ENCODE measurements at regions of chr19 and their contacts with region 1.

Region 1: DNA sequence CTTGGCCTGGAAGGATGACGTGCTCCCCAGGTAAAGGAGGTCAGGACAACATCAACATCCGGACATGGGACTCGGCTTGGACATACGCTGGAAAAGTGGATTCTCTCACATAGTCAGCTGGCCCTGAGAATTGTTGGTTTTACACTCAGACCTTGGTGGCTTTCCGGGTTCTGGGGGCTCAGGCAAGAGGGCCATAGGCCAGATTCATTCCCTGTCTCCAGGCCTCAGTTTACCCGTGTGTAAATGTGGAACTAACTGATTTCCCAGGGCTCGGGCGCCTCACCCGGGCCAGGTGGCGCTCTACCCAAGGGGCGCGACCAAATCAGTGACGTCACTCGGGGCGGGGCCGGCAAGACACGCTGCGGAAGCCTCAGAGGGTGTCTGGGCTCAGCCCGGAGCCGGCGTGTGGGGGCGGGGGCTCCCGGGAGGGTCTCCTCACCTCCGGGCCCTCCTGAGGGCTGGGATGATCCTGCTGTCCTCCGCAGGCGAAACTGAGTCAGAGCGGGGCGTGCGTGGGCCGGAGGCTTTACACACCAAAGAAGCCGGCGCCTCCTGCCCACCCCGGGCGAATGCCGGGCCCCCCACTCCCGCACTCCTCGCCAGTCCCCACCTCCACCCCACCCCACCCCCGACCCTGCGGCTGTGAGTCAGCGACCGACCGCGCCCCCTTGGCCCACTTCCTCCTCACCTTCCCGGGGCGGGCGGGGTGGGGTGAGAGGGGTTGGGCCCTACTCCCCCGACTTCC is 861 bp upstream of the VASP start:
- DNase-seq: peak; percentile 95 to 100 (median 97)
- ATAC-seq: peak; percentile 76
- H3K4me3 ChIP-seq: peak overlapping the region; percentile 89
- H3K4me3 Mint-ChIP-seq: peak overlapping the region; percentile 99
- H3K27ac ChIP-seq: peak overlapping the region; percentile 94 to 95
- H3K27ac Mint-ChIP-seq: peak overlapping the region; percentile 99
- H3K4me1 ChIP-seq: peaks cover 47% of the 10 kb centered on the region
- H3K4me1 Mint-ChIP-seq: peaks cover 47% of the 10 kb centered on the region
- H3K27me3 ChIP-seq: no peaks in the 10 kb centered on the region
- H3K27me3 Mint-ChIP-seq: no peaks in the 10 kb centered on the region
- CTCF ChIP-seq: peak; percentile 63

Region 2: DNA sequence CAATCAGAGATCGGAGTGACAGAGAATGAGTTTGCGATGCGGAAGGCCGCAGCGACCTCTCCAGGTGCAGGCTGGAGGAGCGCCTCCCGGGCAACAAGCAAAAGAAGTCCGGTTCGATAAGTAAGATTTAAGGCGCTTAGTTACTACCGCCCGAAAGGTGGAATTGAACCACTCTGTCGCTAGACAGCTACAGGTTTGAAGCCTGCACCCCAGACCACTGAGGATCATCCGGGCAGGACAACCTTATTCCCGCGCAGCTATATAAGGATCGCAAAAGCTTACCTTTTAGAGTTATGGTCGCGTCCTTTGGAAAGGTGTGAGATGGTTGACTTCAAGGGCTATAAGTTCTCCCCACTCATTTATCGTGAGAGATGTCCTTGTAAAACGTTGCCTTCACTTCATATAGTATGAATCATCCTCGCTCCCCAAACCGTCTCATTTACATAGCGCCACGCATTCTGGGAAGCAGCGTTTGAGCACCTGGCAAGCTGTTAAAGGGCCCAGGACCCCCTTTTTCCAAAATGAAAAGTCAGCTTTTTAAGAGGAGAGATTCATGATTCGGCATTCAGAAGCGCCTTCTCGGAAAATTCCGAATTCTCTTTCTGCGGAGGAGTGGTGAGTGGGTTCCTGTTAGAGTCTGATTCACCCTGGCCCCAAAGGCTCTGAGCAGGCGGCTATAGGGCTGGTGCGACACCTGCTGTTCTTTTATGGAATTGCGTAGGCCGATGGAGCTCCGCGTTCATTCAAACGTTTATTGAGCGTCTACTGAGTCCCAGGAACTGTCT is 27.8 kb before region 1 on chr19:
- CTCF ChIA-PET with region 1: interaction called, 11 read pairs
- POLR2A ChIA-PET with region 1: no interaction called
- intact Hi-C with region 1: no loop called
- DNase-seq: peak; percentile 79 to 95 (median 86)
- ATAC-seq: peak; percentile 74
- H3K4me3 ChIP-seq: peak overlapping the region; percentile 64
- H3K4me3 Mint-ChIP-seq: peak overlapping the region; percentile 86
- H3K27ac ChIP-seq: peak overlapping the region; percentile 98 to 99
- H3K27ac Mint-ChIP-seq: peak overlapping the region; percentile 99
- H3K4me1 ChIP-seq: peaks cover 37% of the 10 kb centered on the region
- H3K4me1 Mint-ChIP-seq: peaks cover 29% of the 10 kb centered on the region
- H3K27me3 ChIP-seq: peaks cover 0 to under 1% of the 10 kb centered on the region in 2 experiments
- H3K27me3 Mint-ChIP-seq: peaks cover 21% of the 10 kb centered on the region
- CTCF ChIP-seq: peak; percentile 85

Region 3: GRCh38 chr19:45485305-45486077 is 20.9 kb before region 1 on chr19:
- CTCF ChIA-PET with region 1: interaction called, 4 read pairs
- POLR2A ChIA-PET with region 1: no interaction called
- intact Hi-C with region 1: loop called in 1 of 2 experiments (anchors 2 kb)
- DNase-seq: peak; percentile 95 to 98 (median 97)
- ATAC-seq: peak; percentile 99
- H3K4me3 ChIP-seq: peak overlapping the region; percentile 69
- H3K4me3 Mint-ChIP-seq: peak overlapping the region; percentile 98
- H3K27ac ChIP-seq: no peak overlapping the region
- H3K27ac Mint-ChIP-seq: peak overlapping the region; percentile 47
- H3K4me1 ChIP-seq: peaks cover 14% of the 10 kb centered on the region
- H3K4me1 Mint-ChIP-seq: peaks cover 6% of the 10 kb centered on the region
- H3K27me3 ChIP-seq: no peaks in the 10 kb centered on the region
- H3K27me3 Mint-ChIP-seq: peaks cover 7% of the 10 kb centered on the region
- CTCF ChIP-seq: peak; percentile 86

Region 4: DNA sequence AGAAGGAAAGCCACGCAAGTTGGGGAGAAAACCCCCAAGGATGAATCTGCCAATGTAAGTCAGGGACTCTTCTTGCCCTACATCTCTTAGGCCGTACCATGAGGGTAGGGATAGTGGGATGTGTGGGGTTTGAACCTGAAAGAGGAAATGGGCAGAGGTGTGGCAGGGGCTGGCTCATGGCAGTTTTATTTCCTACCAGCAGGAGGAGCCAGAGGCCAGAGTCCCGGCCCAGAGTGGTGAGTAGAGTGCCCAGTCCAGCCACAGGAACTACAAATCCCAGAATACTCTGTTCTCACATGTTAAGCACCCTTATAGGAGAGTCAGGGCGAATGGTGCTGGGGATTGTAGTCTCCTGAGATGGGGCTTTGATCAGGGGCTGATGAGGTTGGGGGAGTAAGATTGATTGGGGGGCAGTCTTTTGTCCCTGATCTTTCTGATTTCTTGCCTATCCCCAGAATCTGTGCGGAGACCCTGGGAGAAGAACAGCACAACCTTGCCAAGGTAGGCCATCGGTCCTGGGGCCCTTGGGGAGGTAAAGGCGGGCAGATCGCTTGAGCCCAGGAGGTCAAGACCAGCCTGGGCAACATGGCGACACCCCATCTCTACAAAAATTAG is 17.3 kb after region 1 on chr19:
- CTCF ChIA-PET with region 1: interaction called, 3 read pairs
- POLR2A ChIA-PET with region 1: no interaction called
- intact Hi-C with region 1: loop called (anchors 1 to 2 kb)
- DNase-seq: peak; percentile 54 to 92 (median 66)
- ATAC-seq: peak; percentile 99
- H3K4me3 ChIP-seq: no peak overlapping the region
- H3K4me3 Mint-ChIP-seq: no peak overlapping the region
- H3K27ac ChIP-seq: no peak overlapping the region
- H3K27ac Mint-ChIP-seq: peak overlapping the region; percentile 53
- H3K4me1 ChIP-seq: peaks cover 11% of the 10 kb centered on the region
- H3K4me1 Mint-ChIP-seq: peaks cover 19% of the 10 kb centered on the region
- H3K27me3 ChIP-seq: no peaks in the 10 kb centered on the region
- H3K27me3 Mint-ChIP-seq: no peaks in the 10 kb centered on the region
- CTCF ChIP-seq: peak; percentile 76

Region 5: GRCh38 chr19:45547976-45548609 is 41.7 kb after region 1 on chr19:
- CTCF ChIA-PET with region 1: no interaction called
- POLR2A ChIA-PET with region 1: no interaction called
- intact Hi-C with region 1: no loop called
- DNase-seq: no peak
- ATAC-seq: no peak
- H3K4me3 ChIP-seq: no peak overlapping the region
- H3K4me3 Mint-ChIP-seq: no peak overlapping the region
- H3K27ac ChIP-seq: no peak overlapping the region
- H3K27ac Mint-ChIP-seq: no peak overlapping the region
- H3K4me1 ChIP-seq: peaks cover 2% of the 10 kb centered on the region
- H3K4me1 Mint-ChIP-seq: no peaks in the 10 kb centered on the region
- H3K27me3 ChIP-seq: no peaks in the 10 kb centered on the region
- H3K27me3 Mint-ChIP-seq: no peaks in the 10 kb centered on the region
- CTCF ChIP-seq: no peak

Region 6: GRCh38 chr19:45584332-45585157 is 78.1 kb after region 1 on chr19 and contains the start of gene OPA3:
- CTCF ChIA-PET with region 1: no interaction called
- POLR2A ChIA-PET with region 1: interaction called, 3 read pairs
- intact Hi-C with region 1: loop called in 1 of 2 experiments (anchors 2 kb)
- DNase-seq: peak; percentile 97 to 100 (median 99)
- ATAC-seq: peak; percentile 85
- H3K4me3 ChIP-seq: peak within 1 kb of the TSS; percentile 95
- H3K4me3 Mint-ChIP-seq: peak within 1 kb of the TSS; percentile 88
- H3K27ac ChIP-seq: peak within 1 kb of the TSS; percentile 98 to 99
- H3K27ac Mint-ChIP-seq: peak within 1 kb of the TSS; percentile 98
- H3K4me1 ChIP-seq: peaks cover 21% of the 10 kb centered on the region
- H3K4me1 Mint-ChIP-seq: peaks cover 26% of the 10 kb centered on the region
- H3K27me3 ChIP-seq: peaks cover 0 to under 1% of the 10 kb centered on the region in 2 experiments
- H3K27me3 Mint-ChIP-seq: peaks cover 12% of the 10 kb centered on the region
- CTCF ChIP-seq: no peak
- total RNA-seq, gene OPA3: 3.1 to 3.2 TPM

Region 7: DNA sequence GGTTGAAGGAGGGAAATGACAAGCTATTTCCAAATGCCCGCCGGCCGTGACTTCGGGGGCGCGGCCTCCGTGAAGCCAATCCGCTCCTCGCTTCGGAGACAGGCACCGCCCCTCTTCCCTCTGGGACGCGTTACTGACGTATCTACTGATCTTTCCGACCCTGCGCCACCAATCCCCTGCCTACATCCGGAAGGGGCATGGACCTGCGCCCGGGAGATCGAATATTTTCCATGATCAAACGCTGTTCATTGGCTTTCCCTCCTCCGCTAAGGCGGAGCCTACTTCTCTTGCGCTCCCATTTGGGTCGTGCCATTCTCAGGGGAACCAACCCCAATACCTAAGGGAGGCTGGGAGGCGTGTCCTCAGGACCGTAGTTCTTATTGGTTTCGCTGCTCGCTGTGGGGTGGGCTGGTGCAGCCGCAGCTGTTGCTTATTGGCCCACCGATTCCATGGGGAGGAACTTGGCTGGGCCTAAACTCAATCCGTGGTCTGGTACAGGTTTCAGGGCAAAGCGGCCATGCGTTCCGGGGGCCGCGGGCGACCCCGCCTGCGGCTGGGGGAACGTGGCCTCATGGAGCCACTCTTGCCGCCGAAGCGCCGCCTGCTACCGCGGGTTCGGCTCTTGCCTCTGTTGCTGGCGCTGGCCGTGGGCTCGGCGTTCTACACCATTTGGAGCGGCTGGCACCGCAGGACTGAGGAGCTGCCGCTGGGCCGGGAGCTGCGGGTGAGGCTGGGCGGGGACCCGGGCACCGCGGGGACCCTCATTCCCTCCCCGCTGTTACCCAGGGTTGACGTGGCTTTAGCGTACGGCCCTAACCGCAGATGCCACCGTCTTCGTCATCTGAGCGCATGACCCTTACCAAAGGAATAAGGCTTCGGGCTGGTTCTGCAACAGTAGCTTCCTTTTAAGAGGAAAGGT is 186.0 kb after region 1 on chr19 and contains the start of gene QPCTL:
- CTCF ChIA-PET with region 1: interaction called, 3 read pairs
- POLR2A ChIA-PET with region 1: no interaction called
- intact Hi-C with region 1: loop called in 1 of 2 experiments (anchors 5 kb)
- DNase-seq: peak; percentile 92 to 99 (median 94)
- ATAC-seq: peak; percentile 87
- H3K4me3 ChIP-seq: peak within 1 kb of the TSS; percentile 85
- H3K4me3 Mint-ChIP-seq: peak within 1 kb of the TSS; percentile 96
- H3K27ac ChIP-seq: peak within 1 kb of the TSS; percentile 86 to 93
- H3K27ac Mint-ChIP-seq: peak within 1 kb of the TSS; percentile 95
- H3K4me1 ChIP-seq: peaks cover 39% of the 10 kb centered on the region
- H3K4me1 Mint-ChIP-seq: peaks cover 33% of the 10 kb centered on the region
- H3K27me3 ChIP-seq: no peaks in the 10 kb centered on the region
- H3K27me3 Mint-ChIP-seq: no peaks in the 10 kb centered on the region
- CTCF ChIP-seq: no peak
- total RNA-seq, gene QPCTL: 3.7 to 5.0 TPM

Measured in CD4-positive, alpha-beta T cell (primary cell).